Posterior vena cava (tissue), 2 donors: ENCODE measurements at regions of chr17 and their contacts with region 1.

Region 1: DNA sequence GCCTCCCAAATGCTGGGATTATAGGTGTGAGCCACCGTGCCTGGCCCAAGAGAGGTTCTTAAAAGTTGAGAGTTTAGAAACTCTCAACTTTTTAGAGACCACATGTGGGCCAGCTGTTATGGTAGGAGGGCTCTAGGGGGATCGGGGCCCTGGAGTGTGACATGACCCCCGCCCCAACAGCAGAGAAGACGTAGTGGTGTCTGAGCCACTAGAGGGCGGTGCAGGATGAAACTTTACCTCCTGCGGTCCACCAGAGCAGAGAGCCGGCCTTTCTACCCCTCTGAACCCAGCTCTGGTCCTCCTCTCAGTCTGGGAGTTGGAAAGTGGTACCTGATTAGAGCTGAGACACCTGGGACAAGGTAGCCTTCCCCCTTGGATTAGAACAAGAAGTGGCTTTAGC is 7.4 kb downstream of the CDK5RAP3 start:
- DNase-seq: peak; percentile 87

Region 2: GRCh38 chr17:47927821-47928400 is 50.4 kb before region 1 on chr17:
- intact Hi-C with region 1: loop called in 1 of 2 experiments (anchors 2 kb)
- DNase-seq: no peak

Region 3: GRCh38 chr17:47957591-47958428 is 20.5 kb before region 1 on chr17 and contains the start of gene PRR15L:
- intact Hi-C with region 1: no loop called
- DNase-seq: no peak
- total RNA-seq, gene PRR15L: not detected

Region 4: GRCh38 chr17:48011405-48012150 is 33.3 kb after region 1 on chr17:
- intact Hi-C with region 1: loop called (anchors 5 kb)
- DNase-seq: no peak